Activated CD4-positive, alpha-beta T cell treated with anti-CD3 and anti-CD28 coated beads for 36 hours (primary cell): ENCODE measurements at regions of chr12 and their contacts with region 1.

Region 1: DNA sequence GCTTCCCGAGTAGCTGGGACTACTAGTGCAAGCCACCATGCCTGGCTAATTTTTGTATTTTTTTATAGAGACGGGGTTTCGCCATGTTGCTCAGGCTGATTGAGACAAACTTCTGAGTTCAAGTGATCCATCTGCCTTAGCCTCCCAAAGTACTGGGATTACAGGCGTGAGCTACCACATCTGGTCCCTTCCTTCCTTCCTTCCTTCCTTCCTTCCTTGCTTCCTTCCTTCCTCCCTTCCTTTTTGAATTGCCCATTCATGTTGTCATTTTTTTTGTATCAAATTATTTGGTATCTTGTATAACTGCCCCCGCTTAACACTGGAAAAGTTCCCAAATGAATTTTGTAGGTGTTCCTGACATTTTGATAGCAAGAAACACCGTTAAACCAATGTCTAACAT is 11.7 kb downstream of the RAD9B start:
- DNase-seq: no peak
- ATAC-seq: no peak
- H3K4me3 Mint-ChIP-seq: no peak overlapping the region
- H3K27ac Mint-ChIP-seq: no peak overlapping the region
- H3K4me1 Mint-ChIP-seq: no peaks in the 10 kb centered on the region
- H3K27me3 Mint-ChIP-seq: peaks cover 2% of the 10 kb centered on the region

Region 2: GRCh38 chr12:110531741-110532333 is 18.0 kb after region 1 on chr12:
- CTCF ChIA-PET with region 1: interaction called, 11 read pairs
- POLR2A ChIA-PET with region 1: no interaction called
- intact Hi-C with region 1: no loop called
- DNase-seq: no peak
- ATAC-seq: peak; percentile 77
- H3K4me3 Mint-ChIP-seq: no peak overlapping the region
- H3K27ac Mint-ChIP-seq: peak overlapping the region; percentile 56
- H3K4me1 Mint-ChIP-seq: peaks cover 24% of the 10 kb centered on the region
- H3K27me3 Mint-ChIP-seq: no peaks in the 10 kb centered on the region

Region 3: DNA sequence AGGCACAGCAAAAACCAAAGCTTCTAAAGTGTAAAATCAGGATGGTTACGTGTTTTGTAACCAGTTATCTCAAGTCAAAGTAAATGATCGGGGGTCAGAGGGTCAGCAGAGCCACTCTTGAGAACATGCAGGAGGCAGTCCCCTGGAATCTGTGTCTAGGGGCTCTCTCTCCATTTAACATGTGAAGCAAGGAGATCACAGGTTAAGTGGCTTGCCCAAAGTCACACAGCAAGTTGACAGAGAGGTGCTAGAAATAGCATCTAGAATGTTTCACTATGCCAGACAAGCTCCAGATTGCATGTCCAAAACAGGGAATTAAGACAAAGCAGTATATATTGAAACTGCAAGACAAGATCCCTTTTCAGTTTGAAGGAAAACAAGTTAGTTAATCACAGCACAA is 35.9 kb after region 1 on chr12:
- CTCF ChIA-PET with region 1: interaction called, 7 read pairs
- POLR2A ChIA-PET with region 1: no interaction called
- intact Hi-C with region 1: loop called (anchors 2 to 5 kb)
- DNase-seq: no peak
- ATAC-seq: no peak
- H3K4me3 Mint-ChIP-seq: no peak overlapping the region
- H3K27ac Mint-ChIP-seq: no peak overlapping the region
- H3K4me1 Mint-ChIP-seq: peaks cover 41% of the 10 kb centered on the region
- H3K27me3 Mint-ChIP-seq: no peaks in the 10 kb centered on the region

Region 4: DNA sequence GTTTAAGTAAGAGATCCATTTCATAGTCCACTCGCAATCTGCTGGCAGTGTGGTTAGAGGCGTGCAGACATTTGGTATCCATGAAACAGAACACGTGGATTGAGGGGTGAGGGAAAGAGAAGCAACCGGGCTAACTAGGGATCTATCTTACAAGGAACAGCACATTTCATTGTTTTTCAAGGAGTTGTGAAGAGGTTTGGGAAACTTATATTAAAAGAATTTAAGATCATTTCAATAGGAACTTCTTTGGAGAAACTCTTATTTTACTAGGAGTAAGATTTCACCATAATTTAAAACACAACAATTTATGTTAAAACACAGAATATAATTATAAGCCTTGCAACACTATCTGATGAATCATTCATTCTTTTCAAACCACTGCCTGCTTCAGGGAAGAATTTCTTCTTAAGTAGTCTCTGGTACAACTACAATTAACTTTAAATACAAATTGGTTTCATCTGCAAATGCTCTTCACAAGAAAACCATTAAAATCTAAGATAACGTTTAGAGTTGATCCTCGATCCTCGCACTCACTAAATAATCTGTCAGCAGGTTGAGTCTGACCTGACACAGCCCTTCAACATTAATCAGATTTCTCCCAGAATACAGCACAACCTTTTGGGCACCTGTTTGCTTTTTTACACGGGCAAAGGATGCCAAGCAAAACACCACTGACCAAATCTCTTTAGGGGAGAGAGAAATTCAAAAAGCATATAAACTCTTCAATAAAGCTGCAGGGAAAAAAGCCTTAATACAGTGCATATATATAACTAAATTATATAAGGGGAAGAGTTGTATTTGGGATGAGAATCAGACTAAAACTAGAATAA is 42.0 kb after region 1 on chr12:
- CTCF ChIA-PET with region 1: interaction called, 7 read pairs
- POLR2A ChIA-PET with region 1: no interaction called
- intact Hi-C with region 1: loop called (anchors 2 to 5 kb)
- DNase-seq: no peak
- ATAC-seq: no peak
- H3K4me3 Mint-ChIP-seq: no peak overlapping the region
- H3K27ac Mint-ChIP-seq: peak overlapping the region; percentile 29
- H3K4me1 Mint-ChIP-seq: peaks cover 56% of the 10 kb centered on the region
- H3K27me3 Mint-ChIP-seq: no peaks in the 10 kb centered on the region

Region 5: GRCh38 chr12:111143271-111143670 is 629.4 kb after region 1 on chr12:
- CTCF ChIA-PET with region 1: no interaction called
- POLR2A ChIA-PET with region 1: no interaction called
- intact Hi-C with region 1: no loop called
- DNase-seq: no peak
- ATAC-seq: no peak
- H3K4me3 Mint-ChIP-seq: no peak overlapping the region
- H3K27ac Mint-ChIP-seq: no peak overlapping the region
- H3K4me1 Mint-ChIP-seq: no peaks in the 10 kb centered on the region
- H3K27me3 Mint-ChIP-seq: peaks cover 3% of the 10 kb centered on the region

Region 6: GRCh38 chr12:111596990-111597830 is 1083.4 kb after region 1 on chr12:
- CTCF ChIA-PET with region 1: no interaction called
- POLR2A ChIA-PET with region 1: no interaction called
- intact Hi-C with region 1: no loop called
- DNase-seq: peak; percentile 53
- ATAC-seq: peak; percentile 5
- H3K4me3 Mint-ChIP-seq: peak overlapping the region; percentile 92
- H3K27ac Mint-ChIP-seq: peak overlapping the region; percentile 79
- H3K4me1 Mint-ChIP-seq: peaks cover 22% of the 10 kb centered on the region
- H3K27me3 Mint-ChIP-seq: no peaks in the 10 kb centered on the region